OCI-LY7 (cell line): ENCODE measurements at regions of chr11 and their contacts with region 1.

Region 1: GRCh38 chr11:26186389-26186788 is 145.5 kb upstream of the ANO3 start:
- DNase-seq: no peak
- H3K4me3 ChIP-seq: no peak overlapping the region
- H3K27ac ChIP-seq: no peak overlapping the region
- H3K4me1 ChIP-seq: peaks cover 8% of the 10 kb centered on the region
- CTCF ChIP-seq: no peak

Region 2: DNA sequence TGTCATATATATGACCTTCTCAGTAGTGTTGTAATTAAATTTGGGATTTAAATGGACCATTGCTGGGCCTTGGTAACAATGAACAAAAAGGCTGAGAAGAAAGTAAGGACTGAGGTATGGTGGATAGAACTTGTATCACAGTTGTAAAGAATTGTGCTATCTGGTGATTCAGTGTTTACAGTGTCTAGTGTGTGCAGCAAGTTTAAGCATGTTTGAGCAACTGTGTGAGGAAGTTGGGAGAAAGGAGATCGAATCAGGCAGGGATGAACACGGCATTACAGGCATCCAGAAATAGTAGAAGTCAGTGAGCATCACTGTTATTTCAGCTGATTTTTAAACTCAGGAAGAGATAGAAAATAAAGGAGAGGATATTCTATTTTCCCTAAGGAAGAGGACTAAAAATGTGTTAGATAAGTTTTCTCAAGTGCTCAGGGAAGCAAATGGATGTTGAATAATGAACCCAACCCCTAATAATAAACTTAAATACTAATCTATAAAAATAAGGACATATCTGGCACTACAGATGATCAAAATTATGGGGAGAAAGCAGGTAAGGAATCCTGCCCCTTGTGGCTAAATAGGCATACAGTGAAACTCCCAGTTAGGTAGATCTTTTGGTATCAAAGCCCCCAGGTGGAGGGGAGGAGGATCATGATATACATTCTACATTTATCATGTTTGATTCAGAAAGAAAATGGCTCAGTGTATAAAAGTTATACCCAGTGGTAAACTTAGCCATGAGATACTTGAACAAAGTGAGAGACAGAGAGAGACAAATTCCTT is 215.5 kb before region 1 on chr11:
- CTCF ChIA-PET with region 1: no interaction called
- POLR2A ChIA-PET with region 1: interaction called, 11 read pairs
- intact Hi-C with region 1: no loop called
- DNase-seq: peak; percentile 41
- H3K4me3 ChIP-seq: no peak overlapping the region
- H3K27ac ChIP-seq: no peak overlapping the region
- H3K4me1 ChIP-seq: no peaks in the 10 kb centered on the region
- CTCF ChIP-seq: peak; percentile 82

Region 3: GRCh38 chr11:26377619-26378018 is 191.2 kb after region 1 on chr11:
- CTCF ChIA-PET with region 1: no interaction called
- POLR2A ChIA-PET with region 1: no interaction called
- intact Hi-C with region 1: no loop called
- DNase-seq: no peak
- H3K4me3 ChIP-seq: no peak overlapping the region
- H3K27ac ChIP-seq: no peak overlapping the region
- H3K4me1 ChIP-seq: no peaks in the 10 kb centered on the region
- CTCF ChIP-seq: no peak